Activated T-helper 2 cell treated with anti-CD3 and anti-CD28 coated beads, Interferon-gamma antibody, Interleukin-2, Interleukin-4, amounts not matched to agents 10 μg/mL and 5 μg/mL and 100 μg/mL, durations not matched to agents 14 hours and 24 hours and 36 hours (primary cell): ENCODE measurements at regions of chr7 and their contacts with region 1.

Region 1: DNA sequence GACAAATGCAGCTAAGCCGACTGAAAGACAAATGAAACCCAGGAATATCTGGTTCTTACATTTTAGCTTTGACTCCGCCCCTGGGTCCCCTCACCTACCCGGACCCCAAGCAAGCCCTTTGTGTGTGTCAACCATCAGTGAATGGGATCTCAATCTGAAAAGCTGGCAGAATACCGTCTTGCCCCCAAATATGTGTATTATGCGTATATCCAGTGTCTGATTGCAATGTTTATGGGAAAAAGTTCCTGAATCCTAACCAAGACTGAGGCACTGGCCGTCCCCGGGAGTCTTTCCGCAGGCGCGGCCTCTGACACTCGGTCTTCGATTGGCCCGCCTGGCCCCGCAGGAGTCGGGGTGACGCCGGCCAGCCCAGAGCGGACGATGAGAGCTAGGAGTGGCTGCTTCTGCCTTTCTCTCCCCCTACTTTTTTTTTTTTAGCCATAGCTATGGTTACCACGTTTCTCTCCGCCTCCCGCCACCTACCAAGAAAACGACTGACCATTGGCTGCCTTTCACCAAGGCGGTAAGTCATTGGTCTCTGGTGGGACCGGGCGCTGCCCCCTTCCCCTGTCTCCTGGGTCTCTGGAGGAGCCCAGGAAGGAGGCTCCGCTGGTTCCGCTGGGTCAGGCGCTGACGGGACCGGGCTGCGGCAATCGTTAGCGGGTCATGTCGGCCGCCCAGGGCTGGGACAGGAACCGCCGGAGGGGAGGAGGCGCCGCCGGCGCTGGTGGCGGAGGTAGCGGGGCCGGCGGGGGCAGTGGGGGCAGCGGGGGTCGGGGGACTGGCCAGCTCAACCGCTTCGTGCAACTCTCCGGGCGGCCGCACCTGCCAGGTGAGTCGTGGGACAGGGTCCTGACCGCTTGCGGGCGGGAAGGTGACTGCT is at the start of gene KLHDC10:
- DNase-seq: peak; percentile 94
- H3K4me3 Mint-ChIP-seq: peak within 1 kb of the TSS; percentile 95
- H3K27ac Mint-ChIP-seq: peak within 1 kb of the TSS; percentile 81
- H3K4me1 Mint-ChIP-seq: peaks cover 19% of the 10 kb centered on the region
- H3K27me3 Mint-ChIP-seq: no peaks in the 10 kb centered on the region
- total RNA-seq, gene KLHDC10: 13.9 and 16.0 TPM in 2 replicates

Region 2: GRCh38 chr7:130032698-130033097 is 37.5 kb before region 1 on chr7:
- intact Hi-C with region 1: no loop called
- DNase-seq: no peak
- H3K4me3 Mint-ChIP-seq: no peak overlapping the region
- H3K27ac Mint-ChIP-seq: no peak overlapping the region
- H3K4me1 Mint-ChIP-seq: no peaks in the 10 kb centered on the region
- H3K27me3 Mint-ChIP-seq: no peaks in the 10 kb centered on the region

Region 3: GRCh38 chr7:130144312-130145171 is 74.3 kb after region 1 on chr7:
- intact Hi-C with region 1: no loop called
- DNase-seq: no peak
- H3K4me3 Mint-ChIP-seq: no peak overlapping the region
- H3K27ac Mint-ChIP-seq: no peak overlapping the region
- H3K4me1 Mint-ChIP-seq: peaks cover 3% of the 10 kb centered on the region
- H3K27me3 Mint-ChIP-seq: peaks cover 41% of the 10 kb centered on the region

Region 4: GRCh38 chr7:130182990-130183389 is 112.8 kb after region 1 on chr7:
- intact Hi-C with region 1: loop called (anchors 5 kb)
- DNase-seq: no peak
- H3K4me3 Mint-ChIP-seq: no peak overlapping the region
- H3K27ac Mint-ChIP-seq: peak overlapping the region; percentile 55
- H3K4me1 Mint-ChIP-seq: peaks cover 22% of the 10 kb centered on the region
- H3K27me3 Mint-ChIP-seq: no peaks in the 10 kb centered on the region

Region 5: GRCh38 chr7:130277763-130278643 is 207.8 kb after region 1 on chr7:
- intact Hi-C with region 1: loop called (anchors 10 kb)
- DNase-seq: no peak
- H3K4me3 Mint-ChIP-seq: no peak overlapping the region
- H3K27ac Mint-ChIP-seq: peak overlapping the region; percentile 63
- H3K4me1 Mint-ChIP-seq: peaks cover 21% of the 10 kb centered on the region
- H3K27me3 Mint-ChIP-seq: peaks cover 3% of the 10 kb centered on the region

Region 6: GRCh38 chr7:130486114-130486958 is 416.1 kb after region 1 on chr7:
- intact Hi-C with region 1: loop called (anchors 10 kb)
- DNase-seq: peak; percentile 37
- H3K4me3 Mint-ChIP-seq: peak overlapping the region; percentile 78
- H3K27ac Mint-ChIP-seq: peak overlapping the region; percentile 3
- H3K4me1 Mint-ChIP-seq: peaks cover 22% of the 10 kb centered on the region
- H3K27me3 Mint-ChIP-seq: peaks cover 58% of the 10 kb centered on the region

Region 7: DNA sequence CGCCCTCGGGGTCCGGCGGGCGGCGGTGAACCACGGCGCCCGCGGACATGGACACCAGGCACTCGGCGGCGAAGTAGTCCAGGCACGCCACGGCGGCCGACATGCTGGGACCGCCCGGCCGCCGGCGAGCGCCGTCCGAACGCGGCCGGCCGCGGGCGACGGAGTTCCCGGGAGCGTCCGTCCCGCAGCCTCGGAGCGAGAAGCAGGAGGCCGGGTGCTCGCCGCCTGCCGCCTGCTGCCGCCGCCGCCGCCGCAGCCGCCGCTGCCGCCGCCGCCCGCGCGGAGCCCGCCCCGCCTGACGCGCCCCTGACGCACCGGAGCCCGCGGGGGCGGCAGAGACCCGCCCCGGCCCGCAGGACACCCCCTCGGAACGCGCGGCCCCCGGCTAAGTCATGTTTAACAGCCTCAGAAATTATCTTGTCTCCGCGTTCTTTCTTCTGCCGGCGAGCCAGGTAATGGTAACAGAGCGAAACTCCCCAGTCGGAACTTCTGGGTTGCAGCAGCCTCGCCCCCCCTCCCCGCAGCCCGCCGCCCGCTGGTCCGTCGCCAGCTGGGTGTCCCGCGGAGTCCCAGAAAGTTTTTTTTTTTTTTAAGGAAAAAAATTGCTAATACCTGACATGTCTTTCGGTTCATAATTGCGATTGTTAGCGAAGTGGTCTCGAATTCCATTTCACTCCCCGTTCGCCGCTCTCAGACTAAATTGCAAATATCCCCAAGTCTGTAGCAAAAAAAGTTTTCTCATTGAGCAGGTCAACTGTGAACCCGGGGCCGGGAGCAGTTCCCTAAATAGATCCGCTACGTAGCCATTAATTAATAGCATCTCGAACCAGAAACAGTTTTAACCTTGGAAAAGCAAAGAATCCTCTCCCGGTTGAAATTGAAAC is 664.0 kb after region 1 on chr7 and contains the start of gene KLF14:
- intact Hi-C with region 1: loop called (anchors 5 kb)
- DNase-seq: peak; percentile 10
- H3K4me3 Mint-ChIP-seq: peak within 1 kb of the TSS; percentile 81
- H3K27ac Mint-ChIP-seq: no peak within 1 kb of the TSS
- H3K4me1 Mint-ChIP-seq: peaks cover 7% of the 10 kb centered on the region
- H3K27me3 Mint-ChIP-seq: peaks cover 73% of the 10 kb centered on the region
- total RNA-seq, gene KLF14: not detected in 2 replicates

Region 8: GRCh38 chr7:130831817-130832481 is 761.7 kb after region 1 on chr7:
- intact Hi-C with region 1: loop called (anchors 2 kb)
- DNase-seq: no peak
- H3K4me3 Mint-ChIP-seq: no peak overlapping the region
- H3K27ac Mint-ChIP-seq: no peak overlapping the region
- H3K4me1 Mint-ChIP-seq: no peaks in the 10 kb centered on the region
- H3K27me3 Mint-ChIP-seq: peaks cover 15% of the 10 kb centered on the region